ENCODE measurements at regions of chr2 and their contacts with region 1.

Region 1: DNA sequence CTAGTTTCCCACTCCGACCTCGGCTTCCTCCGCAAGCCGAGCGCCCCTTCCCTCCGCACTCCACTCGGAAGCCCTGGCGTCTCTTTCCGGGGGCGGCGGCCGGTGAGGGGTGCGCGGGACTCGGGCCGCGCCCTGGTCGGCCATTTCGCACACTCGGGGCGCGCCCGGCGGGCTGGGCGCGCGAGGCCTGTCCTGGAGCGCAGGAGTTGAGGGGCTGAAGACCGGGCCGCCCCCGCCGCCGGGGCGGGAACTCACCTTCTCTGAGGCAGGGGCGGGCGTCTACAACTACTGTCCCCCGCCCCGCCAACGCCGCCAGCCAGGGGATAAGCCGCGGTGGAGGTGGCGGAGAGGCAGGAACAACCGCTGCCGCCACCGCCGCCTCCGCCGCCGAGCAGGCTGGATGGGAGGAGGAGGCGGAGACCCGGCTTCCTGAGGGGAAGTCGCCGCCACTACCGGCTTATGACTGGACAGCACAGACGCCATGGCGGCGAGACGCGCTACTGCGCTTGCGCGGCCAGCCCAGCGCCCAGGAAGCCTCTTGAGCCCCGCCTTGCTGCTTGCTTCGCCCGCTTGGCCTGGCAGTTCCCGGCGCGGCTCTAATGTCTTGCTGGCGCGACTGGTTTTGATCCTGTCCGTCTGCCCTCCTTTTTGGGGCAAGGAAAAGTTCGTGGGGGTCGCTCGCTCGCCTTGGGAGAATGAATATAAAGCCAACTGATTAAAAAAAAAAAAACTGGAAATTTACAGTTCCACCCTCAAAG is at the start of gene KRCC1:
- DNase-seq: peak; percentile 95 to 96 (median 96)
- H3K4me3 ChIP-seq: peak within 1 kb of the TSS; percentile 89 to 98 (median 93)
- H3K27ac ChIP-seq: peak within 1 kb of the TSS; percentile 91 to 94
- H3K4me1 ChIP-seq: peaks cover 22 to 37% (median 32%) of the 10 kb centered on the region in 4 experiments
- H3K27me3 ChIP-seq: no peaks in the 10 kb centered on the region

Region 2: GRCh38 chr2:88016086-88016959 is 39.2 kb before region 1 on chr2 and contains the start of gene RNU2-63P:
- CTCF ChIA-PET with region 1: interaction called, 3 read pairs
- POLR2A ChIA-PET with region 1: interaction called, 13 read pairs
- DNase-seq: peak; percentile 81 to 91 (median 84)
- H3K4me3 ChIP-seq: peak within 1 kb of the TSS; percentile 76 to 94 (median 85)
- H3K27ac ChIP-seq: peak within 1 kb of the TSS; percentile 99
- H3K4me1 ChIP-seq: peaks cover 0 to 8% (median 2%) of the 10 kb centered on the region in 4 experiments
- H3K27me3 ChIP-seq: no peaks in the 10 kb centered on the region

Region 3: GRCh38 chr2:88074854-88075292 is 19.3 kb after region 1 on chr2:
- CTCF ChIA-PET with region 1: interaction called, 21 read pairs
- POLR2A ChIA-PET with region 1: no interaction called
- DNase-seq: no peak
- H3K4me3 ChIP-seq: no peak overlapping the region
- H3K27ac ChIP-seq: no peak overlapping the region
- H3K4me1 ChIP-seq: no peaks in the 10 kb centered on the region
- H3K27me3 ChIP-seq: no peaks in the 10 kb centered on the region

Region 4: GRCh38 chr2:88082781-88083180 is 27.2 kb after region 1 on chr2:
- CTCF ChIA-PET with region 1: interaction called, 21 read pairs
- POLR2A ChIA-PET with region 1: no interaction called
- DNase-seq: no peak
- H3K4me3 ChIP-seq: no peak overlapping the region
- H3K27ac ChIP-seq: no peak overlapping the region
- H3K4me1 ChIP-seq: no peaks in the 10 kb centered on the region
- H3K27me3 ChIP-seq: no peaks in the 10 kb centered on the region

Region 5: DNA sequence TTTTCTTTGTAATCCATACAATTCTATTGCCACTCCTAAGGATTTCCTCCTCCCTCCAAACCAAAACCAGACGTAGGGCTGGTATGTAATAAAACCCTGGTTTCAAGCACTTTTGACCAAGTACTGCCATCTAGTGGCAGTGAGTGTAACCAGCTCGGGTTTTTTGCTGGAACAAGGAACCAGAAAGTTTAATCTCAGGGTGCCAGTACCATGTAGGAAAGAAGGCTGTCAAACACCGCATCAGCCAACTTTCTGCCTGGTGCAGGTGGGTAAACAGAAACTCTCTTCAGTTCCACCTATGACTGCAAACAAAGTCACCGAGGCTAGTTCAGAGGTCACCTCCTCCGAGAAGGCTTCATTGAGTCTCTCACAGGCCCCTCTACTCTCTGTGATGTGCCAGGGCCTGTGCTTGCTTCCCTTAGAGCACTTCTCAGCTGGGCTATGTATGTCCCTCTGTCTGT is 104.4 kb after region 1 on chr2:
- CTCF ChIA-PET with region 1: interaction called, 63 read pairs
- POLR2A ChIA-PET with region 1: no interaction called
- DNase-seq: peak; percentile 68 to 81 (median 79)
- H3K4me3 ChIP-seq: no peak overlapping the region
- H3K27ac ChIP-seq: no peak overlapping the region
- H3K4me1 ChIP-seq: no peaks in the 10 kb centered on the region
- H3K27me3 ChIP-seq: peaks cover 0 to 2% (median 0%) of the 10 kb centered on the region in 5 experiments

Region 6: DNA sequence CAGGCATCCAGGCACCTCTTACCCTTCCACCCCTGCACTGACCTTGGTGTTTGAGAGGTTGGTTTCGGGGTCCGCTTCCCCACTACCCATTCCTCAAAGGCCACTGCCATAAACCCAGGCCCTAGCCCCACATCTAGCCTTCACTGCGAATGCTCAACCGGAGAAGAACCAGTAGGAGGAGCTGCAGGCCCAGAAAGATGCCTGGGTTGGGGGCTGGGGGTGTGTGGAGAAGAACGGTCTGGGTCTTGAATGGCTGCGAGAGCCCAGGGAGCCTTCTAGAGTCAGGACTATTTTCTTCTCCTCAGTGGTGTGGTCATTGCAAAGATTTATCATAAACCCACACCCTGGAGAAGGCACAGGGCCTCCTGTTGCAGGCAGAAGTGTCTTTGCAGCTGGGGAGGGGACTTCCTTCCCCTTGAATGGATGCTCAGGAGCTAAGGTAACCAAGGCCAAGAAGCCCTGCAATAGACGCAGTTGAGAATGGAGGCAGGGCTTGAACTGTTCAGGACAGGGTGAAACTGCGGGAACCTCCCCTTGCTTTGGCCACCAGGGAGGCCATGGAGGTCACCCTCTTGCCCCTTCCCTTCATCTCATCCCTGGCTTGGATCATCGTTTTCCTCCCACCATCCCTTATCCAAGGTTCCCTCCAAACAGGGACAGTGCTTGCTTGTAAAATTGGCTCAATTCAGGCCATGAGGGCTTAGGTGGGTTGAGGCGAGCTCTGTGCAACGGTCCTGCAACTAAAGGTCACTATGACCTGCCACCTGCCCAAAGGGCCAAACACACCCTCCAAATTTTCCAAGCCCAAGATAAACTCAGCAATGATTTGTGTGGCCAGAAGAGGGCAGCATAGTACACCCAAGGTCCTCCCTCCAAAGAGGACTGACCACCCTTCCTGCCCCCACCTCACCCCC is 135.5 kb after region 1 on chr2:
- CTCF ChIA-PET with region 1: interaction called, 17 read pairs
- POLR2A ChIA-PET with region 1: no interaction called
- DNase-seq: peak; percentile 46 to 71 (median 66)
- H3K4me3 ChIP-seq: no peak overlapping the region
- H3K27ac ChIP-seq: no peak overlapping the region
- H3K4me1 ChIP-seq: peaks cover 0 to 5% (median 0%) of the 10 kb centered on the region in 4 experiments
- H3K27me3 ChIP-seq: peaks cover 0 to 4% (median 0%) of the 10 kb centered on the region in 5 experiments

Region 7: DNA sequence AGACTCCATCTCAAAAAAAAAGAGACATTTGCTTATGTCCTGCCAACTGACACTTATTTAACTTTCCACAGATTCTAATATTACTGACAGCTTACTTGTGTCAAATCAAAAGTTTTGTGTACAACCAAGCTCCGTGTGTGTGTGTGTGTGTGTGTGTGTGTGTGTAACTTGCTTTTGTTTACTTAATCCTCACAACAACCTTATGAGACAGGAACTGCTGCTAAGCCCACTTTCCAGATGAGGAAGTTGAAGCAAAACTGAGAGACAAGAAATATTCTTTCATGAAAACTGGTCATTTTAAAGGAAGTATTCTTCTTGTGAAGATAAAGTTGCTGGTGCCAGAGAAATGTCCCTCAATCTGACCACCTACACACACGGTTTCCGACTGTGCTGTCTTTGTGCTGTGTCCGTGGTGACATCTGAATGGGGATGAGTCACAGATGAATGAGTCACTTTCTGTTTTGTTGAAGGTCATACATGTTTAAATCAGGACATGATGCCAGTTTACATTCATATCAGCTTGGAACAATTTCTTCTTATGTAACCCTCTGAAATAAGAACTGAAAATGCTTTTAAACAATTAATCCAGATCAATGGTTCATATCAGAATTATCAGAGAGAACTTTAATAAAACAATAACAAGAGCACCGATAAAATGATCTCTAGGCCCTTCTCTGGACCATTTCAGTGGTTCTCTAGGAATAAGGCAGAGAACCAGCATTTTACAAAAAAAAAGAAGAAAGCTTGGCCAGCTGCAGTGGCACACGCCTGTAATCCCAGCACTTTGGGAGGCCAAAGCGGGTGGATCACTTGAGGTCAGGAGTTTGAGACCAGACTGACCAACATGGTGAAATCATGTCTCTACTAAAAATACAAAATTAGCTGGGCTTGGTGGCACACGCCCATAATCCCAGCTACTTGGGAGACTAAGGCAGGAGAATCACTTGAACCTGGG is 210.1 kb after region 1 on chr2:
- CTCF ChIA-PET with region 1: no interaction called
- POLR2A ChIA-PET with region 1: no interaction called
- DNase-seq: peak; percentile 22 to 66 (median 41)
- H3K4me3 ChIP-seq: no peak overlapping the region
- H3K27ac ChIP-seq: no peak overlapping the region
- H3K4me1 ChIP-seq: no peaks in the 10 kb centered on the region
- H3K27me3 ChIP-seq: peaks cover 0 to 4% (median 0%) of the 10 kb centered on the region in 5 experiments

Measured in common myeloid progenitor, CD34-positive (primary cell).